MCF 10A (cell line): ENCODE measurements at regions of chr3 and their contacts with region 1.

Region 1: DNA sequence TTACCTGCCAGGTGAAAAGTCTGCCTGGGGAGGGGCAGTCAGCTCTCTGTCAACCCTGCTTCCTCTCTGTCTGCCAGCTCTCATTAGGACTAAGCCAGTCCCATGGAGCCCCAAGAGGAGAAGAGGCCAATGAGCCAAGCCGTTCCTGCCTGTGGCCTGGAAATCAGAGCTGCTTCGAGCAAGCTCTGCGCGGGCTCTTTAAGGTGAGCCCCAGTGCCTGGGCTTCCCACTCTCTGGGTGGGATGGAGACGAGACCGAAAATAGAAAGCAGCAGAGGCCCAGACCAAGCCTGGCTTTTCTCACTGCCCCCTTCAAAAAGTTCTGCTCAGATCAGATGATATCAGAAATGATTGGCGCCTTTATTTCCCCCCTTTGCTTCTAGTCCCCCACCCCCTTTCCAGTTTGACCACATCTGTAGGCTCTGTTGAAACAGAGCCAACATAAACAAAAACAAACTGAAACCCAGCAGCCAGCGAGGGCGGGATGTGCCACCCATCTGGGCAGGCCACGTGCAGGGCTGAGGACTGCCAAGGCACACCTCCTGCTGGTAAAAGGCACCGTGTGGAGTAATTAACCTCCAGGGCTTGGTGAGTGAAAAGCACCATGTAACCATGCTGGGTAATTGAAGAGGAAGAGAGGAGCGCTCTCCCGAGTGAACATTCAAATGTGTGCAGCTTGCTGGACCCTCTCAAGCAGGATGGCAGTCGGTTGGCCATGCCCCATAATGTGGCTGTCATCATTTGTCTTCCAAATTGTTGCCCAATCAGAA is 471.0 kb upstream of the PROK2 start:
- DNase-seq: peak; percentile 92
- H3K4me3 Mint-ChIP-seq: no peak overlapping the region
- H3K27ac Mint-ChIP-seq: peak overlapping the region; percentile 51
- H3K4me1 Mint-ChIP-seq: peaks cover 9% of the 10 kb centered on the region
- H3K27me3 Mint-ChIP-seq: peaks cover 70% of the 10 kb centered on the region
- CTCF ChIP-seq: peak; percentile 13

Region 2: GRCh38 chr3:71978150-71978721 is 277.7 kb before region 1 on chr3:
- CTCF ChIA-PET with region 1: no interaction called
- POLR2A ChIA-PET with region 1: no interaction called
- intact Hi-C with region 1: loop called (anchors 5 kb)
- DNase-seq: no peak
- H3K4me3 Mint-ChIP-seq: no peak overlapping the region
- H3K27ac Mint-ChIP-seq: no peak overlapping the region
- H3K4me1 Mint-ChIP-seq: peaks cover 20% of the 10 kb centered on the region
- H3K27me3 Mint-ChIP-seq: peaks cover 63% of the 10 kb centered on the region
- CTCF ChIP-seq: no peak